ENCODE measurements at regions of chr11 and their contacts with region 1.

Region 1: GRCh38 chr11:118145285-118146227 is 7.1 kb downstream of the SCN4B start:
- DNase-seq: peak; percentile 41
- ATAC-seq: peak; percentile 99
- H3K4me3 ChIP-seq: peak overlapping the region; percentile 74
- H3K27ac ChIP-seq: no peak overlapping the region
- H3K4me1 ChIP-seq: no peaks in the 10 kb centered on the region
- H3K27me3 ChIP-seq: peaks cover 36% of the 10 kb centered on the region
- CTCF ChIP-seq: peak; percentile 87
- POLR2A ChIP-seq: 0 out of 2 replicates have a peak, but pooled peaks have one; percentile 31
- RAD21 ChIP-seq: peak; percentile 85

Region 2: GRCh38 chr11:118171269-118172062 is 25.9 kb after region 1 on chr11:
- CTCF ChIA-PET with region 1: interaction called, 4 read pairs
- POLR2A ChIA-PET with region 1: no interaction called
- dilution Hi-C with region 1: no loop called
- in situ Hi-C with region 1: no loop called
- intact Hi-C with region 1: loop called (anchors 1 kb)
- DNase-seq: peak; percentile 36
- ATAC-seq: peak; percentile 93
- H3K4me3 ChIP-seq: no peak overlapping the region
- H3K27ac ChIP-seq: no peak overlapping the region
- H3K4me1 ChIP-seq: peaks cover 5% of the 10 kb centered on the region; the same call in 1 of the 2 replicates
- H3K27me3 ChIP-seq: peaks cover 26% of the 10 kb centered on the region
- CTCF ChIP-seq: peak; percentile 70
- POLR2A ChIP-seq: no peak
- RAD21 ChIP-seq: peak; percentile 70

Region 3: GRCh38 chr11:118198370-118198769 is 52.8 kb after region 1 on chr11:
- CTCF ChIA-PET with region 1: no interaction called
- POLR2A ChIA-PET with region 1: no interaction called
- dilution Hi-C with region 1: no loop called
- in situ Hi-C with region 1: no loop called
- intact Hi-C with region 1: loop called (anchors 1 kb)
- DNase-seq: peak; percentile 44
- ATAC-seq: peak; percentile 88
- H3K4me3 ChIP-seq: no peak overlapping the region
- H3K27ac ChIP-seq: no peak overlapping the region
- H3K4me1 ChIP-seq: no peaks in the 10 kb centered on the region
- H3K27me3 ChIP-seq: peaks cover 4% of the 10 kb centered on the region
- CTCF ChIP-seq: peak; percentile 77
- POLR2A ChIP-seq: no peak
- RAD21 ChIP-seq: peak; percentile 73

Region 4: DNA sequence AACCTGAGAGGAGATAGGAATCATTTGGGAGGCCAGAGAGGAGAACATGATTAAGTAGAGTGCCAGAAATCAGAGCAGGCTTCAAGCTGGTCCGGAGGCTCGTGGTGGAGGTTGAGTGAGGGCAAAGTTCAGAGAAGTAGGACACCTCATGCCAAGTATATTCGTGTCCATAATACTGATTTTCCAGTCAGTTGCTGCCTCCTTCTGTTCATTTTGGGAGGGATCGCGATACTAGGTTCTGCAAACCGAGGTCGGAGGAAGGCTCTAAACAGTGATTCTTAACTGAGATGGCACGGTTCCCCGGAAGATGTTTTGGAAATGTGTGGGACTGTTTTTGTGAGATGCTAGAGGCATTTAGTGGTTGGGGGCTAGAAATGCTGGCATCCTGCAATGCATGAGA is 145.4 kb after region 1 on chr11:
- CTCF ChIA-PET with region 1: no interaction called
- POLR2A ChIA-PET with region 1: no interaction called
- dilution Hi-C with region 1: no loop called
- in situ Hi-C with region 1: no loop called
- intact Hi-C with region 1: no loop called
- DNase-seq: no peak
- ATAC-seq: no peak
- H3K4me3 ChIP-seq: no peak overlapping the region
- H3K27ac ChIP-seq: no peak overlapping the region
- H3K4me1 ChIP-seq: no peaks in the 10 kb centered on the region
- H3K27me3 ChIP-seq: no peaks in the 10 kb centered on the region; the same call in 1 of the 2 replicates
- CTCF ChIP-seq: no peak
- POLR2A ChIP-seq: no peak
- RAD21 ChIP-seq: no peak

Region 5: GRCh38 chr11:118301600-118302195 is 156.1 kb after region 1 on chr11:
- CTCF ChIA-PET with region 1: no interaction called
- POLR2A ChIA-PET with region 1: no interaction called
- dilution Hi-C with region 1: no loop called
- in situ Hi-C with region 1: no loop called
- intact Hi-C with region 1: no loop called
- DNase-seq: no peak
- ATAC-seq: no peak
- H3K4me3 ChIP-seq: no peak overlapping the region
- H3K27ac ChIP-seq: no peak overlapping the region
- H3K4me1 ChIP-seq: no peaks in the 10 kb centered on the region
- H3K27me3 ChIP-seq: peaks cover 12% of the 10 kb centered on the region
- CTCF ChIP-seq: no peak
- POLR2A ChIP-seq: no peak
- RAD21 ChIP-seq: no peak

Region 6: GRCh38 chr11:118353084-118353710 is 207.6 kb after region 1 on chr11:
- CTCF ChIA-PET with region 1: no interaction called
- POLR2A ChIA-PET with region 1: no interaction called
- dilution Hi-C with region 1: no loop called
- in situ Hi-C with region 1: loop called (anchors 10 kb)
- intact Hi-C with region 1: loop called (anchors 1 kb)
- DNase-seq: peak; percentile 5
- ATAC-seq: no peak
- H3K4me3 ChIP-seq: no peak overlapping the region
- H3K27ac ChIP-seq: no peak overlapping the region
- H3K4me1 ChIP-seq: no peaks in the 10 kb centered on the region
- H3K27me3 ChIP-seq: peaks cover 11% of the 10 kb centered on the region
- CTCF ChIP-seq: peak; percentile 63
- POLR2A ChIP-seq: no peak
- RAD21 ChIP-seq: peak; percentile 45

Region 7: DNA sequence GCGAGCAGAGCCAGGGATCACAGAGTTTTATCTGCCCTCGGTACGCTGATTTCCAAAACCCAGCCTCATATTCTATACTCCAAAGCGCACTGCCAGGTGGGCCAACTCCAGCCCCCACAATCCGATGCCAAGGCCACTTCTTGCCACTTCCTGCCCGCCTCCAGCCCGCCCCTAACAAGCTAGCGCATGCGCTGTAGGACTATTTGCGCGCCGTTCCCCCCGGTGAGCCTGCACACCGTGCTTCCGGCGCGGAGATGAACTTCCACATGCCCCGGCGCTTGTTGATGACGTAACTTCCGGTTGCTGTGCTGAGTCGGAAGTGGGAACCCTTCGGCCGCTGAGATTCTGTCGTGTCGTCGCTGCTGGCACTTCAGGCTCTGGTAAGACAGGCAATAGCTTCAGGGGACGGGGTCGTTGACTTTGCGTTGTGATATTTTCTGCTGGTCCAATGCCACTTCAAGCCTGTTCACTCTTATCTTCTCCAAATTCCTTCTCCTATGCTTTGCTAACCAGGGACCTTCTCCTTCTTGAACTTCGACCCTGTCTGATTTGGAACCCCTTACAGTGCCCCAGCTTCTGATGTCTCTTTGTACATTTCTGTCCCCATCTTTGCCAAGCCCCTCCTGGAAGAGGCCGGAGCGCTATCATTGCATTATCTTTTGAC is 213.9 kb after region 1 on chr11 and contains the start of gene UBE4A:
- CTCF ChIA-PET with region 1: no interaction called
- POLR2A ChIA-PET with region 1: no interaction called
- dilution Hi-C with region 1: no loop called
- in situ Hi-C with region 1: loop called (anchors 10 kb)
- intact Hi-C with region 1: no loop called
- DNase-seq: peak; percentile 93
- ATAC-seq: peak; percentile 88
- H3K4me3 ChIP-seq: peak within 1 kb of the TSS; percentile 78
- H3K27ac ChIP-seq: peak within 1 kb of the TSS; percentile 75
- H3K4me1 ChIP-seq: peaks cover 2% of the 10 kb centered on the region; the same call in 1 of the 2 replicates
- H3K27me3 ChIP-seq: no peaks in the 10 kb centered on the region
- CTCF ChIP-seq: no peak
- POLR2A ChIP-seq: peak; percentile 80
- RAD21 ChIP-seq: no peak
- total RNA-seq, gene UBE4A: 69.7 and 71.1 TPM in 2 replicates

Region 8: GRCh38 chr11:118488480-118489109 is 343.0 kb after region 1 on chr11:
- CTCF ChIA-PET with region 1: no interaction called
- POLR2A ChIA-PET with region 1: no interaction called
- dilution Hi-C with region 1: no loop called
- in situ Hi-C with region 1: no loop called
- intact Hi-C with region 1: loop called (anchors 5 kb)
- DNase-seq: peak; percentile 83
- ATAC-seq: peak; percentile 88
- H3K4me3 ChIP-seq: no peak overlapping the region
- H3K27ac ChIP-seq: no peak overlapping the region
- H3K4me1 ChIP-seq: no peaks in the 10 kb centered on the region
- H3K27me3 ChIP-seq: no peaks in the 10 kb centered on the region
- CTCF ChIP-seq: peak; percentile 83
- POLR2A ChIP-seq: no peak
- RAD21 ChIP-seq: peak; percentile 82

Region 9: DNA sequence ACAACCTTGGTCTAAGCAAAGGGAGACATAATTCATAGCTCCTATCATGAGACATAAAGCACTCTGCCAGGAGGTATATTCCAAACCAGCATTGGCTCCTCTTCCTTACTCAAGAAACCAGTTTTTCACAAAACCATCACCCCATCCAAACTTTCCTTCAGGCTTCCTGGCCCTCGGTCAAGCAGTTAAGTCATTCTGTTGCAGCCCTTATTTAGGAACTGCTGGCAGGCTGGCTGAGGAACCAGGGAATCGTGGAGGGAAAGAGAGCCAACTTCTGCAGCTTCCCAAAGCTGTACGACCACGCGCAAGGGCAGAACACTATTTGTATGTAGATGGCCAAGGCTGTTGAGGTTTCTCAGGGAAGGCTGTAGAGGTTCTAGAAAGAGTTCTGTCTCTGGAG is 419.5 kb after region 1 on chr11:
- CTCF ChIA-PET with region 1: no interaction called
- POLR2A ChIA-PET with region 1: no interaction called
- dilution Hi-C with region 1: no loop called
- in situ Hi-C with region 1: no loop called
- intact Hi-C with region 1: loop called (anchors 5 kb)
- DNase-seq: no peak
- ATAC-seq: no peak
- H3K4me3 ChIP-seq: no peak overlapping the region
- H3K27ac ChIP-seq: no peak overlapping the region
- H3K4me1 ChIP-seq: peaks cover 2% of the 10 kb centered on the region; the same call in 1 of the 2 replicates
- H3K27me3 ChIP-seq: no peaks in the 10 kb centered on the region
- CTCF ChIP-seq: no peak
- POLR2A ChIP-seq: no peak
- RAD21 ChIP-seq: no peak